K562 (cell line): ENCODE measurements at regions of chr17 and their contacts with region 1.

Region 1: GRCh38 chr17:30378824-30379302 is at the start of gene CPD:
- DNase-seq: peak; percentile 97 to 100 (median 99)
- ATAC-seq: peak; percentile 97
- H3K4me3 ChIP-seq: peak within 1 kb of the TSS; percentile 72
- H3K27ac ChIP-seq: peak within 1 kb of the TSS; percentile 42
- H3K4me1 ChIP-seq: peaks cover 21 to 33% of the 10 kb centered on the region in 2 experiments
- H3K27me3 ChIP-seq: no peaks in the 10 kb centered on the region
- CTCF ChIP-seq: no peak
- EP300 ChIP-seq: no peak
- POLR2A ChIP-seq: peak; percentile 81
- RAD21 ChIP-seq: no peak
- polyA plus RNA-seq, gene CPD: 4.5 to 4.9 TPM

Region 2: DNA sequence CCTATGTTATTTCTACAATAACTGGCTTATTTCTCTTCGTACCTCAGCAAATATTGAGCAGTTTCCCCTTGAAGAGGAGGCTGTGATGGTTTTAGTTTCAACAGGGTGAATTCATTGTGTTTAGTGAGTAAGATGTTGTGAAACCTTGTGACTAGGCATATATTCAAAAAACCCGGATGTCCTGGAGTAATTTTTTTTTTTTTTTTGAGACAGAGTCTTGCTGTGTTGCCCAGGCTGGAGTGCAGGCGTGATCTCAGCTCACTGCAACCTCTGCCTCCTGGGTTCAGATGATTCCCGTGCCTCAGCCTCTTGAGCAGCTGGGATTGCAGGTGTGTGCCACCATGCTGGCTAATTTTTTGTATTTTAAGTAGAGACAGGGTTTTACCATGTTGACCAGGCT is 11.0 kb after region 1 on chr17:
- CTCF ChIA-PET with region 1: no interaction called
- POLR2A ChIA-PET with region 1: interaction called, 10 read pairs
- in situ Hi-C with region 1: no loop called
- intact Hi-C with region 1: no loop called
- DNase-seq: no peak
- ATAC-seq: no peak
- H3K4me3 ChIP-seq: no peak overlapping the region
- H3K27ac ChIP-seq: no peak overlapping the region
- H3K4me1 ChIP-seq: peaks cover 7 to 9% of the 10 kb centered on the region in 2 experiments; a peak in 4 of 5 replicates
- H3K27me3 ChIP-seq: no peaks in the 10 kb centered on the region
- CTCF ChIP-seq: no peak
- EP300 ChIP-seq: no peak
- POLR2A ChIP-seq: no peak
- RAD21 ChIP-seq: no peak